Colonic mucosa (tissue), 4 donors: ENCODE measurements at regions of chr15 and their contacts with region 1.

Region 1: DNA sequence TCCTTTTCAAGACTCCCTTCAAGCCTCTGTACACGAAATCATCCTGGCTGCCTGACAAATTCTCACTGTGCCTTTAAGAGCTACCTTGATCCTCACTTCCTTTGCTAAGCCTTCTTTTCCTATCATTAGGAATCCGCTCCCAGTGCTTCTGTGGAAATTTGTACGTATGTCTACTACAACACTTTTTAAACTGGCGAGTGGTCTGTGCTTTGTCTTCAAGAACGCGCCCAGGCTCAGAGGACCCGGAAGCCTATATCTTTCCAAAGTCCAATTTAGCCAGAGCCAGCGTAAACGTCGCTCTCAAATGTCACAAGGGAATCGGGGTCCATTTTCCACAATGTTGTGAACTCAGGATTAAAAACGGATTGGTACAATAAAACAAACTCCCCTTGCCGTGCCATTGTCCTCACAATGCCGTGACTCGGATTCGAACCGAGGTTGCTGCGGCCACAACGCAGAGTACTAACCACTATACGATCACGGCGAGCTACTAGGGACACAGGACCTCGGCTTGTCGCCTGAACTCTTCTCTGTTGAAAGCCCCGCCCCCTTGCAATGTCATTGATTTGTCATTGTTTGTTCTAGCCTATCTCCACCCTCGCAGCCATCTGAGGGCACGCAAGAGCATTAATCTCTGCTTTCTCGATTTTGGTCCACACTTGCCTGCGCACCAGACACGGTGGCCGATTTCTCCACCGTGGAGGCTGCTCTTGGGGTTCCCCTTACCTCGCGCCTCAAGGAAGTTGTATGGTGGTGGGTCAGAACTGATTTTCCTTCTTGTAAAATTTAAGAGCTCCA is 12.4 kb upstream of the SHF start:
- DNase-seq: peak; percentile 99
- H3K4me3 ChIP-seq: peak overlapping the region; percentile 45
- H3K27ac ChIP-seq: peak overlapping the region; percentile 95
- H3K4me1 ChIP-seq: no peaks in the 10 kb centered on the region
- H3K27me3 ChIP-seq: no peaks in the 10 kb centered on the region
- CTCF ChIP-seq: no peak

Region 2: DNA sequence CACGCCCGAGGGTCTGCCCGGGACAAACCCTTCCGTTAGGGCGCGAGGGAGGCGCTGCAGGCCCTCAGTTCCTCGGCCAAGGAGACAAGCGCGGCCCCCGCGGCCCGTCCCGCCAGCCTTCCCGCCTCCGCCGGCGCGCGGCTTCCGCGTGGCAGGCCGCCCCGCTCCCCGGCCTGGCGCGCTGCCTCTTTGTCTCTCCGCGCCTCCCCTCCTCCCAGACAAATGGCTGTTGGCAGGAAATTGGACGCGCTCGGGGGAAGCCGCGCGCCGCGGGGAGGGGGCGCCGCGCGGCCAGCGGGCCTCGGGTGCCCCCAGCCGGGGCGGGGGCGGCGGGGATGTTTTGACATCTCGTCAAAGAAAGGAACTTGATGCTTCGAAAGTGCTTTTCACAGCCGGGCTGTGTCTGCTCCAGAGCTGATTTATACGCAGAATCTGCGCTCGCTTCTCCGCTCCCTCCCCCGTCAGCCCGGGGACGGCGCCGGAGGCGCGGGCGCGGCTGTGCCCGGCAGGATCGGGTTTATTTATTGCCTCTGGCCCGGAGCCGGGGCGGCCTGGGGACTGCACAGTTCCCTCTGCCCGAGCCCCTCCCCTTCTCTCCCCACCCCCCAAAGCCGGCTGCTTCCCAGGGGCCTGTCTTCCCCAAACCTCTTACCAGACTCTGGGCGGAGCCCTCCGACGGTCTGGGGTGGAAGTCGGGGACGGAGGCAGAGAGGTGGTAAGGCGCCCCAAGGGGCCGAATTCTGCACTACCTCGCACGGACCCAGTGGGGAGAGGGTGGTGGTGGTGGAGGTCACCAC is 33.2 kb before region 1 on chr15:
- intact Hi-C with region 1: loop called (anchors 5 kb)
- DNase-seq: peak; percentile 86
- H3K4me3 ChIP-seq: peak overlapping the region; percentile 65
- H3K27ac ChIP-seq: peak overlapping the region; percentile 97
- H3K4me1 ChIP-seq: no peaks in the 10 kb centered on the region
- H3K27me3 ChIP-seq: no peaks in the 10 kb centered on the region
- CTCF ChIP-seq: peak; percentile 57

Region 3: DNA sequence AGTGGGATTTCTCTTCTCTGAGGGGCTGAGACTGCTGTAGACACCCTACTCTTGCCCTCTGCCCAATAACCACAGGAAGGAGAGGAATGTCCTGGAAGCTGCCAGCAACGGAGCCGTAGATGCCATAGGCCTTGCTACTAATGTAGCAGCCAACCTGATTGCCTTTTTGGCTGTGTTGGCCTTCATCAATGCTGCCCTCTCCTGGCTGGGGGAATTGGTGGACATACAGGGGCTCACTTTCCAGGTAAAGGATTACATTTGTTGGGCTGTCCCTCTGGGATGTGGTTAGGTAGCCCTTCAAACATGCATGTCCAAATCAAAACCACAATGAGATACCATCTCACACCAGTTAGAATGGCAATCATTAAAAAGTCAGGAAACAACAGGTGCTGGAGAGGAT is 67.9 kb after region 1 on chr15:
- intact Hi-C with region 1: loop called (anchors 5 kb)
- DNase-seq: peak; percentile 61
- H3K4me3 ChIP-seq: no peak overlapping the region
- H3K27ac ChIP-seq: no peak overlapping the region
- H3K4me1 ChIP-seq: no peaks in the 10 kb centered on the region
- H3K27me3 ChIP-seq: no peaks in the 10 kb centered on the region
- CTCF ChIP-seq: peak; percentile 22

Region 4: GRCh38 chr15:45402162-45402954 is 202.2 kb after region 1 on chr15:
- intact Hi-C with region 1: loop called (anchors 5 kb)
- DNase-seq: peak; percentile 97
- H3K4me3 ChIP-seq: peak overlapping the region; percentile 94
- H3K27ac ChIP-seq: peak overlapping the region; percentile 89
- H3K4me1 ChIP-seq: peaks cover 5% of the 10 kb centered on the region
- H3K27me3 ChIP-seq: no peaks in the 10 kb centered on the region
- CTCF ChIP-seq: no peak

Region 5: GRCh38 chr15:45481135-45481534 is 280.9 kb after region 1 on chr15:
- intact Hi-C with region 1: no loop called
- DNase-seq: no peak
- H3K4me3 ChIP-seq: no peak overlapping the region
- H3K27ac ChIP-seq: no peak overlapping the region
- H3K4me1 ChIP-seq: no peaks in the 10 kb centered on the region
- H3K27me3 ChIP-seq: no peaks in the 10 kb centered on the region
- CTCF ChIP-seq: no peak

Region 6: GRCh38 chr15:45831787-45832186 is 631.6 kb after region 1 on chr15:
- intact Hi-C with region 1: no loop called
- DNase-seq: no peak
- H3K4me3 ChIP-seq: no peak overlapping the region
- H3K27ac ChIP-seq: no peak overlapping the region
- H3K4me1 ChIP-seq: no peaks in the 10 kb centered on the region
- H3K27me3 ChIP-seq: no peaks in the 10 kb centered on the region
- CTCF ChIP-seq: no peak